ENCODE measurements at regions of chr5 and their contacts with region 1.

Region 1: GRCh38 chr5:31581498-31582099 is 49.5 kb downstream of the C5orf22 start:
- DNase-seq: peak in 6 of 9 donors; percentile 1 to 49 (median 34)
- ATAC-seq: peak; percentile 36
- H3K4me3 ChIP-seq: no peak overlapping the region
- H3K4me3 Mint-ChIP-seq: no peak overlapping the region
- H3K27ac ChIP-seq: no peak overlapping the region
- H3K27ac Mint-ChIP-seq: no peak overlapping the region
- H3K4me1 ChIP-seq: no peaks in the 10 kb centered on the region
- H3K4me1 Mint-ChIP-seq: no peaks in the 10 kb centered on the region
- H3K27me3 ChIP-seq: no peaks in the 10 kb centered on the region
- H3K27me3 Mint-ChIP-seq: peaks cover 10 to 31% (median 17%) of the 10 kb centered on the region in 5 donors

Region 2: DNA sequence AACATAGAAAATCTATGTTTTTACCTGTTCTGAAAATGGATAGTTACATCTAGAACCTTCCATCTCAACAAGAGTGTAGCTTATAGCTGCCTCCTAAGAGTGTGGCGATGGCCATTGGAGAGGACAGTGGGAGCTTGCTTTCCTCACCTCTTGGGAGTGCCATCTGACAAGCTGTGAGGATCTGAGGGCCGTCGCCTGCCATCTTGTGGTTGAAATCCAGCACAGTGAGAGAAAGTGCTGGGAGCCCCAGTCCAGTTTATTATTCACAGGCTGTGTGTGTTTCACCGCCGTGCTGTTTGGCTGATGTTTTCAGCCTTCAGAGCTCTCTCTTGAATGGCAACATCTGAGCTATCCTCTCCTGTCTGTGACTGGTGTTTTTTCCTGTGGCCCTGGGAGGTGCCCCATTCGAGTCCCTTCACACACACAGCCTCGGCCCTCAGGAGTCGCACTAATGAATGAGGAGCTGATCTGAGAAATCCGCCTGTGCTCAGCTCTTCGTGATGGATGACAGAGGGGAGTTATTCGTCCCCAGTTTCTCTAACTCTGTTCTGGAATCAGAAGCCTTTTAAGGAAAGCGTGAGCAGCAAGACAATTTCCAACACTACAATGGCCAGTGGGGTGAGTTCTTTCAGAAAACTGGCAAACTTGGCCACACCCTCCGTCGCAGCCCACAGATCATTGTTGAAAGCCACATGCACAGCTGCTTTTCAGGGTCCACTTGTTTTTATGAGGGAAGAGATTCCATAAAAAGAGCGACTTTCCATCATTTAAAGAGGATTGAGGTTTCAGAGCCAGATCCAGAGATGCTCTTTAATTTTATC is 227.7 kb after region 1 on chr5:
- CTCF ChIA-PET with region 1: no interaction called
- POLR2A ChIA-PET with region 1: no interaction called
- intact Hi-C with region 1: loop called (anchors 1 to 5 kb)
- DNase-seq: no peak
- ATAC-seq: no peak
- H3K4me3 ChIP-seq: no peak overlapping the region
- H3K4me3 Mint-ChIP-seq: no peak overlapping the region
- H3K27ac ChIP-seq: no peak overlapping the region
- H3K27ac Mint-ChIP-seq: no peak overlapping the region
- H3K4me1 ChIP-seq: no peaks in the 10 kb centered on the region
- H3K4me1 Mint-ChIP-seq: no peaks in the 10 kb centered on the region
- H3K27me3 ChIP-seq: no peaks in the 10 kb centered on the region
- H3K27me3 Mint-ChIP-seq: peaks cover 0 to 9% (median 0%) of the 10 kb centered on the region in 5 donors